Activated CD4-positive, alpha-beta memory T cell treated with anti-CD3 and anti-CD28 coated beads, Interleukin-2, amount 10 ng/mL, durations not matched to agents 7 days and 5 days (primary cell): ENCODE measurements at regions of chr16 and their contacts with region 1.

Region 1: GRCh38 chr16:30874821-30875717 is 18.8 kb downstream of the BCL7C start:
- DNase-seq: peak; percentile 90
- H3K4me3 Mint-ChIP-seq: peak overlapping the region; percentile 93
- H3K27ac Mint-ChIP-seq: peak overlapping the region; percentile 75
- H3K4me1 Mint-ChIP-seq: peaks cover 40% of the 10 kb centered on the region
- H3K27me3 Mint-ChIP-seq: no peaks in the 10 kb centered on the region

Region 2: GRCh38 chr16:30657866-30658730 is 217.0 kb before region 1 on chr16 and contains the start of gene FBRS:
- CTCF ChIA-PET with region 1: no interaction called
- POLR2A ChIA-PET with region 1: no interaction called
- DNase-seq: peak; percentile 100
- H3K4me3 Mint-ChIP-seq: peak within 1 kb of the TSS; percentile 86
- H3K27ac Mint-ChIP-seq: peak within 1 kb of the TSS; percentile 98
- H3K4me1 Mint-ChIP-seq: peaks cover 47% of the 10 kb centered on the region
- H3K27me3 Mint-ChIP-seq: no peaks in the 10 kb centered on the region
- total RNA-seq, gene FBRS: 106 to 107 TPM

Region 3: DNA sequence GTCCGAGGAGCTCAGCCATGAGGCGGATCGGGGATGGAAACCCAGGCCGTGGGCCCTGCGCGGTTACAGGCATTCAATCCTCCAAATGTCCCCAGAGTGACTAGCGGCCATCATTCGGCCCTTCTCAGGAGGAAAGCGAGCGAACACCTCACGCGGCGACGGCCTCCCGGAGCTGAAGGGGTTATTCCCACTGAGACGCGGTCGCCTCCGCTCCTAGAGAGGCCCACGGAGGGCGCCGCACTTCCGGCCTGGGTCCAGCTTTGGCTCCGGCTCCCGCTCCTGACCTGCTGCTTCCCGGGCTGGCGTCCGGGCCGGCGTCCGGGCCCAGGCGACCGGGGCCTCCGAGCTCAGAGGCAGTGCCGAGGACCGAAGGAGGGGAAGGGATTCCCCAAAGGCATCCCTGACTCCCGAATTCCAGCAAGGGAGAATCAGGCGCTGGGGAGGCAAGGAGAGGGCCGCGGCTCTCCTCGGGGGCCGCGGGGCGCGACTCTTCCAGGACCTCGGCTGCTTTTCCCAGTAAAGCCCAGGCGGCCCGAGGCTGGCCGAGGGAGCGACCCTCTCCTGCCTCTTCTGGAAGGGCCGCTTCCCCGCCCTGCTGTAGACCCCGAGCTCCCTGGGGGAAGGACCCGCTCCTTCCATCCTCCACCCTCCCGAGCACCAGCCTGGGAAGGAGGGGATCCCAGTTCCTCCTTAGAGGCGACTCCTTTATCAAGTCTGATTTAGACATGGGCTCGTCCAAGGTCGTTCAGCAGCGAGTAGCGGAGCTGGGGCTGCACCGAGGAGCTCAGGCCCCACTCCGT is 69.5 kb before region 1 on chr16:
- CTCF ChIA-PET with region 1: no interaction called
- POLR2A ChIA-PET with region 1: no interaction called
- DNase-seq: peak; percentile 25
- H3K4me3 Mint-ChIP-seq: peak overlapping the region; percentile 43
- H3K27ac Mint-ChIP-seq: no peak overlapping the region
- H3K4me1 Mint-ChIP-seq: peaks cover 23% of the 10 kb centered on the region
- H3K27me3 Mint-ChIP-seq: peaks cover 13% of the 10 kb centered on the region

Region 4: GRCh38 chr16:30853758-30854157 is 21.3 kb before region 1 on chr16:
- CTCF ChIA-PET with region 1: no interaction called
- POLR2A ChIA-PET with region 1: interaction called, 13 read pairs
- DNase-seq: no peak
- H3K4me3 Mint-ChIP-seq: no peak overlapping the region
- H3K27ac Mint-ChIP-seq: no peak overlapping the region
- H3K4me1 Mint-ChIP-seq: no peaks in the 10 kb centered on the region
- H3K27me3 Mint-ChIP-seq: no peaks in the 10 kb centered on the region

Region 5: DNA sequence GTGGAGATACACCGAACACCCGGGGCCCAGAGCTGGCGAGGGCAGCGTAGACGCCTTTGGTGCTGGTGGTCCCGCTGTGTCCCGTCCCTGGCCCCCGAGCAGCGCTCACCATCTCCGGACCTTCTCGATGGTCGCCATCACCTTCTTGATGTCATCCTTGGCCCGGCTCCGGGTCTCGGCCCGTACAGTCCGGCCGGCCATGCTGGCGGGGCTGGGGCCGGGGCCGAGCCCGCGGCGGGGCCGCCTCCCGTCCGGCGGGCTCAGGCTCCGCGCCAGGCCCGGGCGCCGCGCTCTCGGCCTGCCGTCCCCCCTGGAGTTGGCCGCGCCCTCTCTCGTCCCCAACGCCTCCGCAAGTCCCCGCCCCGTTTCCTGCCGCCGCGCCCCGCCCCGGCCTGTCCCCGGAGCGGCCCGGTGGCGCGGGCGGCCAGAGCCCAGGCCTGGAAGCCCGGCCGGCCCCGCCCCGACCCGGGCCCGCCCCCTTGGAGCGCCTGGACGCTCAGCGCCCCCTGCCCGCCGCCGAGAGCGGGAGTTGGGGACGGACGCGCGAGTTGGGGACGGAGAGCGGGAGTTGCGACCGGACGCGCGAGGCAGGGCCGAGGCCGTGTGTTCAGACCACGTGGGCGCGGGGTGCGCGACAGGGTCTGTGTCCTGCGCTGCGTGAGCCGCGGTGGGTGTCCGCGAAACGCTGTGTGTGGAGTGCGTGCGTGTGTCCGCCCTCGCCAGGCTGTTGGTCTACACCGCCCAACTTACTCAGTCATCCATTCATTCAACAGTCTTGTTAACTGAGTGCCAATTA is 18.9 kb after region 1 on chr16 and contains the start of gene BCL7C:
- CTCF ChIA-PET with region 1: interaction called, 5 read pairs
- POLR2A ChIA-PET with region 1: interaction called, 42 read pairs
- DNase-seq: peak; percentile 86
- H3K4me3 Mint-ChIP-seq: peak within 1 kb of the TSS; percentile 82
- H3K27ac Mint-ChIP-seq: peak within 1 kb of the TSS; percentile 76
- H3K4me1 Mint-ChIP-seq: peaks cover 45% of the 10 kb centered on the region
- H3K27me3 Mint-ChIP-seq: no peaks in the 10 kb centered on the region
- total RNA-seq, gene BCL7C: 22.3 to 23.5 TPM